Activated CD4-positive, alpha-beta T cell treated with anti-CD3 and anti-CD28 coated beads, Interleukin-2, amount 10 ng/mL, durations not matched to agents 24 days and 14 days (primary cell): ENCODE measurements at regions of chr1 and their contacts with region 1.

Region 1: DNA sequence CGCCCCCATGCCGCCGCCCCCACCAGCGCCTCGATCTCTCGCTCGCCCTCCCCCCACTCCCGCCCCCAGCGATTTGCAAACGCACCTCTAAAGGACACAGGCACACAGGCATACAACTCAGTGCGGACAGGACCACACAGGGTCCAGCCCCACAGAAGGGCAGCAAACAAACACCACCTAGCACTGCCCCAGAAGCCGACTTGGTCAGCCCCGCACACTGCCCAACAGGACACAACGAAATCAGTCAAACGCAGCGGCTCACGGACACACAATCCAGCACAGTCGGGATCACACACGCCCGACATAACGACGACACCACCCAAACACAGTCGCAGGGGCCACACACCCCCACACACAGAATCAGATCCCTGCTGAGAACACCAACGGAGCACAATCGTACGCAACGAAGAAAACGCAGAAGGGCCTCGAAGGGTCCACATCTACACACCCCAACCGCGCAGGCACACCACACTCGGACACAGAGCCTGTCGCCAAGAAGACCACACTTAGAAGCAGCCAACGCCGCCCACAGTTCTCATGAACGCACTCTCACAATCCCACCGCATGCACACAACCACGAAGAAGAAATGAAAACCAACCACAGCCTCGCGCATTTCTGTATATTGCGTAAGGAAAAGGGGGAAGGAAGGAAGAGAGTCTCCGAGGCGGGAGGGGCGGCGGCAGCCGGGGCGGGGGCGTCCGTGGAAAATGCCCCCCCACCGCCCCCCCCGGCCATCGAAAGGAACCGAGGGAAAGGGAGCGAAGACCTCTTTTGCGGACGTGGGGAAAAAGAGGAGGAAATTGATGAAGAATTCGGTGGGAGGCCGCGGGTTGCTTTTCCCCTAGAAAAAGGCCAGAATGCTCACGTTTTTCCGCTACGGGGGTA is 481 bp downstream of the TAL1 start:
- DNase-seq: peak; percentile 70
- H3K4me3 Mint-ChIP-seq: peak overlapping the region; percentile 81
- H3K27ac Mint-ChIP-seq: peak overlapping the region; percentile 59
- H3K4me1 Mint-ChIP-seq: peaks cover 19% of the 10 kb centered on the region
- H3K27me3 Mint-ChIP-seq: peaks cover 88% of the 10 kb centered on the region

Region 2: DNA sequence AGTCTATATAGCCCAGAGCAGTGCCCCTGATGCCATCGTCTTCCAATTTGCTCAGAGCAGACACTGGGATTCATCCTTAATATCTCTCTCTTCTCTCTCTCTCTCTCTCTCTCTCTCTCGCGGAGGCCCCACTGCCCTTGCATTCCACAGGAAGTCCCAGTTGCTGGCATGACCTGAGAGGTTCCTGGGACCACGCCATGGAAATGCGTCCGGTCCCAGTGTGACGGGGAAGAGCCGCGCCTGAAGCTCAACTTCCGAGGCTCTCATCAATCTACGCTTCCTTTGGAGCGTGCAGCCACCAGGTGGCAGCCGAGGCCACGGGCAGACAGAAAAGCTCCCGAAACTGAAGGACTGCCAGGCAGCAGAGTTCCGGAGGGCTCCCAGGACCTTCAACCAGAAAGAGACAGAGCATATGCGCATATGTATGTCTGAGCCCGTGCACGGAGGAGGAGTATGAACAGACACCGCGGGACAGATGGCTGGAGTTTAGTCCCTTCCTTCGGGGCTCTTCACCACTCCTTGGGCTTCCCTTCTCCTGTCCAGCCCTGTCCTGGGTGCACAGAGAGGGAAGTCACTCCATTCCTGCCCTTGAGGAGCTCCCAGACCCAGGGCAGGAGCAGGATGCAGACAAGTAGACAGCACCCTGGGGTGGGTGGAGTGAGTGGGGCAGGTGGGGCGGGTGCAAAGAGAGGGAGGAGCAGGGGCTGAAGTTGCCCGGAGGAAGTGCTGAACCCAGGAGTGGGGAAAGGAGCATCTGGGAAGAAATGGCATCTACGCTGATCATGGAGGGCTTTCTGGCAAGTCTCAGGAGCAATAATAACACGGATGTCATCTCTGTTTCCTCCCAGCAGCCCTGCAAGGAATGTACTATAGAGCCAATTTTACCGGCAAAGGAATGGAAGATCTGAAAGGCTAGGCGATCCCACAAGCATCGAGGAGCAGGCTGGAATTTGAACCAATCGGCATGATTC is 52.2 kb before region 1 on chr1:
- intact Hi-C with region 1: loop called (anchors 10 kb)
- DNase-seq: peak; percentile 95
- H3K4me3 Mint-ChIP-seq: peak overlapping the region; percentile 85
- H3K27ac Mint-ChIP-seq: peak overlapping the region; percentile 89
- H3K4me1 Mint-ChIP-seq: peaks cover 11% of the 10 kb centered on the region
- H3K27me3 Mint-ChIP-seq: peaks cover 20% of the 10 kb centered on the region

Region 3: DNA sequence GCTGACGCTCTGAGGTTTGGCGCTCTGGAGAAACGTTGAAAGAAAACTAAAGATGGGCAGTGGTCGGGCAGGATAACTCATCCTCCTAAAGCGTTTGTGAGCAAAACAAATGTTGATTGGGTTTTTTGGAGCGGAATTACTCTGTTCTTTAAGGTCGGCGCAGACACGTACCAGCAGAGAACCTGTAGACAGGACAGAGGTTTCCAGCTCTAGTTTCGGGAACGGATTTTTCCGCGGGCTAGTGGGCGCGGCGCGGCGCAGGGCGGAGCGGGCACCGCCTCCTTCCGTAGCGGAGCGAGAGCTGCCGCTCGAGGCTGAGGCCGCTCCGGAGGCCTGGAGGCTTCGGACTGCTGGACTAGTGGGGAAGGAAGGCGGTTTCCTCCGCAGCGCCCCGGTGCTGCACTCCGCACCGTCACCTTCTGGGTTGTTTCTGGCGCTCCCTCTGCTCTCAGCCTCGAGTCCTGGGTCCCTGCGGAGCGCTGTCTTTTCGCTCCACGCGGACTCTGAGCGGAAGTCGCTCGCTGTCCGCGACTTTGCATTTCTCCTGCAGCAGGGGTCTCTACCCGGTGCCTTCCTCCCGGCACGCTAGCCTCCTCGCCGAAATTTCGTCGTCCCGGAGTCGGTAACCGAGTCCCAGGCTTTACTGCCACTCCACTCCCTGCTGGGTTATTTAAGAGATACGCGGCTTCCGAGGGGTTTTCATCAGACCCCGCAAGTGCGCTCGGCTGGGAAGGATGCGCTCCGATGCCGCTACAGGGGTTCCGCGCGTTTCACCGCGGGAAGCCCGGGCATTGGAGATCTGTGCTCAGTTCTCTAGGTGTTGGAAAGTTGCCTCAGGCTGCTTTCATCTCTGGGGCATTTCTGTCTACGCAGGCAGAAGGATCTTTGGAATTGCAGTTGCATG is 213.3 kb after region 1 on chr1:
- intact Hi-C with region 1: loop called (anchors 2 kb)
- DNase-seq: peak; percentile 77
- H3K4me3 Mint-ChIP-seq: peak overlapping the region; percentile 74
- H3K27ac Mint-ChIP-seq: peak overlapping the region; percentile 65
- H3K4me1 Mint-ChIP-seq: peaks cover 16% of the 10 kb centered on the region
- H3K27me3 Mint-ChIP-seq: peaks cover 48% of the 10 kb centered on the region